Dorsolateral prefrontal cortex (tissue), 120 donors: ENCODE measurements at regions of chr19 and their contacts with region 1.

Region 1: GRCh38 chr19:10332955-10333757 is at the start of gene RAVER1:
- DNase-seq: peak; percentile 95 to 99 (median 98)
- H3K4me3 ChIP-seq: peak within 1 kb of the TSS; percentile 64 to 93 (median 83)
- H3K27ac ChIP-seq: peak within 1 kb of the TSS; percentile 76 to 99 (median 95)
- H3K27me3 ChIP-seq: no peaks in the 10 kb centered on the region
- CTCF ChIP-seq: peak in 14 of 56 donors; percentile 1 to 55 (median 16)
- total RNA-seq, gene RAVER1: 14.3 to 30.3 (median 19.9) TPM

Region 2: GRCh38 chr19:10315335-10316214 is 17.6 kb before region 1 on chr19 and contains the start of gene FDX2:
- intact Hi-C with region 1: loop called (anchors 2 kb)
- DNase-seq: peak; percentile 80 to 93 (median 91)
- H3K4me3 ChIP-seq: peak within 1 kb of the TSS; percentile 63 to 97 (median 90)
- H3K27ac ChIP-seq: peak within 1 kb of the TSS in 52 of 59 donors; percentile 12 to 89 (median 68)
- H3K27me3 ChIP-seq: no peaks in the 10 kb centered on the region
- CTCF ChIP-seq: peak in 14 of 56 donors; percentile 7 to 42 (median 27)
- total RNA-seq, gene FDX2: 29.3 to 73.6 (median 49.2) TPM